ENCODE measurements at regions of chr1 and their contacts with region 1.

Region 1: GRCh38 chr1:234925440-234926263 is 203.0 kb downstream of the TOMM20 start:
- DNase-seq: no peak
- ATAC-seq: peak; percentile 44

Region 2: GRCh38 chr1:234963180-234963903 is 37.7 kb after region 1 on chr1:
- intact Hi-C with region 1: loop called (anchors 5 kb)
- DNase-seq: peak; percentile 96
- ATAC-seq: peak; percentile 62

Region 3: GRCh38 chr1:235246022-235246991 is 320.7 kb after region 1 on chr1:
- intact Hi-C with region 1: no loop called
- DNase-seq: no peak
- ATAC-seq: no peak